ENCODE measurements at regions of chr6 and their contacts with region 1.

Region 1: DNA sequence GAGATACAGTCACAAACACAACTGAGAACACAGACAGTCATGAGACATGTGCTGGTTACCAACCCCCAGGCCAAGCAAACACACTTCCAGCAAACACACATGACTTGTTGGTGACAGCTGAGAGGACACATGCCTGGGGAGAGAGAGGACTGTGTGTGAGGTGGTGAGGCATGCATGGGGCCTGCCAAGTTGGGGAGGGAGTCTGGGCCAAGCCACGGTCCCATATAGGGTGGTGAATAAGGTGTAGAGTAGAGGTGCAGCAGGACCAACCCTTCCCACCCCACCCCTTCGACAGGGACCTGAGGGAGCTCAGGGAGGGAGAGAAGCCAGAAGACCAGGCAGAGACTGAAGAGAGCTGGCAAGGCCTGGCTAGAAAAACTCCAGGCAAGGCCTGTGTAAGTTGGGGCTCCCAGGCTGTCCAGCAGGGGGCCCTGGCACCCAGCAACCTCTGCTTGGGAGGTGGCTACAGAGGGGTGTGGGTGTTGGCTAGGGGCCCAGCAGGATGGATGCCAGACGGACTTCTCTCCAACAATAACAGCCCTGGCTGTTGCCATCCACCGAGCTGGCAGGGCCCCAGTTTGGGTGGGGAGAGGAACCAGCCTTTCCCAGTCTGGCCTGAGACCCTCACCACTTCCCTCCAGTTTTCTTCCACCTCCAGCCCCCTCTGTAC is 2.0 kb upstream of the SLC29A1 start:
- DNase-seq: peak; percentile 68
- H3K4me3 Mint-ChIP-seq: no peak overlapping the region
- H3K27ac Mint-ChIP-seq: peak overlapping the region; percentile 52
- H3K4me1 Mint-ChIP-seq: peaks cover 43% of the 10 kb centered on the region
- H3K27me3 Mint-ChIP-seq: peaks cover 11% of the 10 kb centered on the region

Region 2: GRCh38 chr6:44237813-44238433 is 16.5 kb after region 1 on chr6:
- intact Hi-C with region 1: loop called (anchors 1 kb)
- DNase-seq: peak; percentile 79
- H3K4me3 Mint-ChIP-seq: peak overlapping the region; percentile 82
- H3K27ac Mint-ChIP-seq: peak overlapping the region; percentile 86
- H3K4me1 Mint-ChIP-seq: peaks cover 13% of the 10 kb centered on the region
- H3K27me3 Mint-ChIP-seq: no peaks in the 10 kb centered on the region

Region 3: GRCh38 chr6:44246663-44247337 is 25.4 kb after region 1 on chr6 and contains the start of gene HSP90AB1:
- intact Hi-C with region 1: loop called (anchors 1 kb)
- DNase-seq: peak; percentile 96
- H3K4me3 Mint-ChIP-seq: peak within 1 kb of the TSS; percentile 96
- H3K27ac Mint-ChIP-seq: peak within 1 kb of the TSS; percentile 98
- H3K4me1 Mint-ChIP-seq: peaks cover 45% of the 10 kb centered on the region
- H3K27me3 Mint-ChIP-seq: peaks cover 5% of the 10 kb centered on the region
- total RNA-seq, gene HSP90AB1: 2,065 and 2,095 TPM in 2 replicates

Measured in activated T-helper 1 cell treated with anti-CD3 and anti-CD28 coated beads, Interleukin-12 subunit alpha, Interleukin-12 subunit beta, Interleukin-2, Interleukin-4 antibody, amounts not matched to agents 30 ng/mL and 10 ng/mL and 1 ng/mL, durations not matched to agents 14 hours and 24 hours and 36 hours (primary cell).